Naive thymus-derived CD4-positive, alpha-beta T cell (primary cell): ENCODE measurements at regions of chr11 and their contacts with region 1.

Region 1: DNA sequence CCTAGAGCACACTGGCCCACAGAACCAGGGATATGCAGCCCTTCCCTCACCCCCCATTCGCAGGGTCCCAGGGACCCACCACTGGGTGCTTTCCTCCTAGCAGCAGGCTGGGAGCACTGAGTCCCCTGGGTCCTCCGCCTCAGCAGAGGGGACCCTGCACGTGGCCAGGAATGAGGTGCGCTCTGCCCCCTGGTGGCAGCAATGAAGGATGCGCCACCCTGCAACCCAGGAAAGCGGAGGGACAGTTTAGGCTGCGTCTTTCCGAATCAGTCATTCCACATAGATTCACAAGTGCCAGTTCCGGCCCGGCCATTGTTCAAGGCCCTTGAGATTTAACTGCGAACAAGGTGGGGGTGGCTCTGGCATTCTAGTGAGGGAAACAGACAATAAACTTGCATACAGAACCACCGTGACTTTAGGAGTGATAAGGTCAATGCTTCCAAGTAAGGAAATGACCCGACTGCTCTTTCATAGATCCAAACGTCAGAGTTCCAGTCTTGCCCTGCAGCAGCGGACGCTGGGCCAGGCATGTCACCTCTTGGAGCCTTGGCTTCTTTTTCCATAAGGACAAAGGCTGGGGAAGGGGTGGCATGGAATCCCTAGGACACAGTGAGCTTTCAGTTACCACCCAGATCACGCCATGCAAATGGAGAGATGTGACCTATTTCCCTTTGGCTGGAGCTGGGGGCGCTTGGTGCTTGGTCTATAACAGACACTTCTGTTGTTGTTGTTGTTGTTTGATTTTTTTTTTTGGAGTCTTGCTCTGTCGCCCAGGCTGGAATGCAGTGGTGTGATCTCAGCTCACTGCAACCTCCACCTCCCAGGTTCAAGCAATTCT is 7.7 kb downstream of the RIN1 start:
- DNase-seq: peak; percentile 72 to 88 (median 80)
- ATAC-seq: peak; percentile 89
- H3K4me3 ChIP-seq: peak overlapping the region; percentile 36
- H3K4me3 Mint-ChIP-seq: peak overlapping the region; percentile 18 to 81 (median 68)
- H3K27ac ChIP-seq: peak overlapping the region; percentile 82
- H3K27ac Mint-ChIP-seq: peak overlapping the region; percentile 65 to 97 (median 91)
- H3K4me1 ChIP-seq: peaks cover 26 to 40% of the 10 kb centered on the region in 2 donors
- H3K4me1 Mint-ChIP-seq: peaks cover 25 to 49% (median 46%) of the 10 kb centered on the region in 7 donors
- H3K27me3 ChIP-seq: no peaks in the 10 kb centered on the region
- H3K27me3 Mint-ChIP-seq: no peaks in the 10 kb centered on the region

Region 2: GRCh38 chr11:66222358-66223149 is 106.0 kb before region 1 on chr11:
- CTCF ChIA-PET with region 1: interaction called, 3 read pairs
- POLR2A ChIA-PET with region 1: no interaction called
- intact Hi-C with region 1: loop called in 1 of 2 experiments (anchors 1 kb)
- DNase-seq: peak; percentile 79 to 95 (median 92)
- ATAC-seq: peak; percentile 100
- H3K4me3 ChIP-seq: no peak overlapping the region
- H3K4me3 Mint-ChIP-seq: peak overlapping the region in 4 of 10 donors; percentile 26 to 35 (median 32)
- H3K27ac ChIP-seq: peak overlapping the region; percentile 89
- H3K27ac Mint-ChIP-seq: peak overlapping the region; percentile 78 to 98 (median 92)
- H3K4me1 ChIP-seq: peaks cover 4 to 7% of the 10 kb centered on the region in 2 donors
- H3K4me1 Mint-ChIP-seq: peaks cover 12 to 21% (median 18%) of the 10 kb centered on the region in 7 donors
- H3K27me3 ChIP-seq: no peaks in the 10 kb centered on the region
- H3K27me3 Mint-ChIP-seq: no peaks in the 10 kb centered on the region

Region 3: GRCh38 chr11:66282468-66283386 is 45.8 kb before region 1 on chr11:
- CTCF ChIA-PET with region 1: no interaction called
- POLR2A ChIA-PET with region 1: no interaction called
- intact Hi-C with region 1: loop called in 1 of 2 experiments (anchors 1 kb)
- DNase-seq: peak; percentile 96 to 100 (median 99)
- ATAC-seq: peak; percentile 94
- H3K4me3 ChIP-seq: no peak overlapping the region
- H3K4me3 Mint-ChIP-seq: peak overlapping the region in 9 of 10 donors; percentile 16 to 72 (median 59)
- H3K27ac ChIP-seq: peak overlapping the region; percentile 27
- H3K27ac Mint-ChIP-seq: peak overlapping the region; percentile 68 to 93 (median 85)
- H3K4me1 ChIP-seq: peaks cover 16 to 21% of the 10 kb centered on the region in 2 donors
- H3K4me1 Mint-ChIP-seq: peaks cover 18 to 52% (median 37%) of the 10 kb centered on the region in 7 donors
- H3K27me3 ChIP-seq: no peaks in the 10 kb centered on the region
- H3K27me3 Mint-ChIP-seq: peaks cover 0 to 14% (median 0%) of the 10 kb centered on the region in 5 donors

Region 4: GRCh38 chr11:66317723-66318599 is 10.6 kb before region 1 on chr11:
- CTCF ChIA-PET with region 1: interaction called, 52 read pairs
- POLR2A ChIA-PET with region 1: interaction called, 89 read pairs
- intact Hi-C with region 1: loop called in 1 of 2 experiments (anchors 1 kb)
- DNase-seq: peak in 7 of 9 donors; percentile 79 to 96 (median 86)
- ATAC-seq: peak; percentile 93
- H3K4me3 ChIP-seq: peak overlapping the region; percentile 54
- H3K4me3 Mint-ChIP-seq: peak overlapping the region; percentile 45 to 89 (median 83)
- H3K27ac ChIP-seq: peak overlapping the region; percentile 99
- H3K27ac Mint-ChIP-seq: peak overlapping the region; percentile 88 to 100 (median 99)
- H3K4me1 ChIP-seq: peaks cover 32 to 60% of the 10 kb centered on the region in 2 donors
- H3K4me1 Mint-ChIP-seq: peaks cover 39 to 78% (median 63%) of the 10 kb centered on the region in 7 donors
- H3K27me3 ChIP-seq: no peaks in the 10 kb centered on the region
- H3K27me3 Mint-ChIP-seq: peaks cover 0 to 9% (median 0%) of the 10 kb centered on the region in 5 donors

Region 5: GRCh38 chr11:66344550-66345315 is 16.2 kb after region 1 on chr11 and contains the start of gene BRMS1:
- CTCF ChIA-PET with region 1: interaction called, 5 read pairs
- POLR2A ChIA-PET with region 1: interaction called, 7 read pairs
- intact Hi-C with region 1: loop called in 1 of 2 experiments (anchors 1 kb)
- DNase-seq: peak; percentile 85 to 98 (median 93)
- ATAC-seq: peak; percentile 94
- H3K4me3 ChIP-seq: peak within 1 kb of the TSS; percentile 73
- H3K4me3 Mint-ChIP-seq: peak within 1 kb of the TSS; percentile 94 to 98 (median 96)
- H3K27ac ChIP-seq: peak within 1 kb of the TSS; percentile 92
- H3K27ac Mint-ChIP-seq: peak within 1 kb of the TSS; percentile 91 to 98 (median 96)
- H3K4me1 ChIP-seq: peaks cover 30 to 36% of the 10 kb centered on the region in 2 donors
- H3K4me1 Mint-ChIP-seq: peaks cover 25 to 62% (median 52%) of the 10 kb centered on the region in 7 donors
- H3K27me3 ChIP-seq: no peaks in the 10 kb centered on the region
- H3K27me3 Mint-ChIP-seq: peaks cover 0 to 4% (median 0%) of the 10 kb centered on the region in 5 donors
- total RNA-seq, gene BRMS1: 35.9 to 50.8 (median 48.4) TPM

Region 6: DNA sequence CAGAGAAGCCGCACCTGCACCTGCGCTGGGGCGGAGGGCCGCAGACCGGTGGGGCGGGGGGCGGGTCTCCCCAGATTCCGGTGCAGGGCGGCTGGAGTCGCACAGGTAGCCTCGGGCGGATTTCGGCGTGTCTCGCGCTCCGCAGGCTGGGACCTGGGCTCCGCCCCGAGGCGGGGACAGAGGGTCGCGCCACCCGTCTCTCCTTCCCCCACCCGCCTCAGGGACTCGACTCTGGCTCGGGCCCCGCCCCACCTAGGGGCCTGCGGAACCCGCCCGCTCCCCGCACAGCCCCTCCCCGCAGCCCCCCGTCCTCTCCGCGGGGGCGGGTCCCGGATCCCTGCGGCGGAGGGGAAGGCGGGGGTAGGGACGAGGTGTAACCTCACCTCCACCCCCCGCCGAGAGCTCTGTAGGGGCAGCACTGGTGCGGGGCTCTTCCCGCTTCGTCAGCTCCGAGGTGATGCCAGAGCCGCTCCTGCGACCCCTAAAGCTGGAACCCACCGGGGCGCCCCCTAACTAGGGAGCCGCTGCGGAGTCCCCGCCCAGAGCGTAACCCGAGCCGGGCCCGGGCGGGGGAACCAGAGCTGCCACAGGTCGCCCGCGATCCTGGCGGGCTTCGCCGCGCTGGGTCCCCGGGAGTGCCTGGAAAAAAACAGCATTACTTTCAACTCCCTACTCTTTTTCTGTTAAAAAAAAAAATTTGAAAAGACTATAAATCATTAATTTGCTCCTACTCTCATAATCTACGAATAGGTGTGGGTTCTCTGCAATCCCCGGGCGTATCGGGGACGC is 43.3 kb after region 1 on chr11 and contains the start of gene SLC29A2:
- CTCF ChIA-PET with region 1: no interaction called
- POLR2A ChIA-PET with region 1: no interaction called
- intact Hi-C with region 1: loop called in 1 of 2 experiments (anchors 5 kb)
- DNase-seq: peak; percentile 53 to 85 (median 80)
- ATAC-seq: peak; percentile 89
- H3K4me3 ChIP-seq: peak within 1 kb of the TSS; percentile 72
- H3K4me3 Mint-ChIP-seq: peak within 1 kb of the TSS; percentile 81 to 96 (median 88)
- H3K27ac ChIP-seq: peak within 1 kb of the TSS; percentile 83
- H3K27ac Mint-ChIP-seq: peak within 1 kb of the TSS; percentile 79 to 95 (median 90)
- H3K4me1 ChIP-seq: peaks cover 4 to 8% of the 10 kb centered on the region in 2 donors
- H3K4me1 Mint-ChIP-seq: peaks cover 0 to 24% (median 13%) of the 10 kb centered on the region in 7 donors
- H3K27me3 ChIP-seq: no peaks in the 10 kb centered on the region
- H3K27me3 Mint-ChIP-seq: peaks cover 0 to 3% (median 0%) of the 10 kb centered on the region in 5 donors
- total RNA-seq, gene SLC29A2: 6.0 to 18.9 (median 12.0) TPM

Region 7: DNA sequence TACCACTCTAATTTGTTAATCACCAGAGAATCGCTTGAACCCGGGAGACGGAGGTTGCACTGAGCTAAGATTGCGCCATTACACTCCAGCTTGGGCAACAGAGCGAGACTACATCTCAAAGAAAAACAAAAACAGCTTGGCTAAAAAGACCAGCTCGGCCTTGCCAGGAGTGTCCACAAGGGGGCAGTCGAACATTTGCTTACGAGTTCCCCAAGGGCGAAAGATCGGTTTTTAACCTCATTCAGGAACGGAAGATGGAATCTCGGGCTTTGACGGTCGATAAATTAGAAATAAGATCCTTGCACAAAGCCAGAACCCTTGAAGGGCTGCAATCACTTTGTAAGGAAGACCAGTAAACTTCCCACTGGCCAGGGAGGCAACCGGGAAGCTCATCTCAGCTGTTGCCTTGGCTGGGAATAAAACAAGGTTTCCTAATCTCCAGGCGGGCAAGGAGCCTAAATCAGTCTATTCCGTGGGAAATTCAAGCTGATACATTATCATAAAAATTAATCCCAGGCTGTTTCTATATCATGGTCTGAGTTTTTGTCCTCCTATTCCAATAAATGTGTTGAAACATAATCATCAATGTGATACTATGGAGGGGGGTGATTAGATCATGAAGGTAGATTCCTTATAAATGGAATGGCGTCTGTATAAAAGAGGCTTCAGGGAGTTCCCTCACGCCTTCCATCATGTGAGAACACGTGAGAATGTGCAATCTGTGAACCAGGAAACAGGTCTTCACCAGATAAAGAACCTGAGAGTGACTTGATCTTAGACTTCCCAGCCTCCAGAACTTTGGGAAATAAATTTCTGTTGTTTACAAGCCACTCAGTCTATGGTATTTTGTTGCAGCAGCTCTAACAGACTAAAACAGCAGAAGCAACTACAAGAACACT is 57.9 kb after region 1 on chr11:
- CTCF ChIA-PET with region 1: interaction called, 15 read pairs
- POLR2A ChIA-PET with region 1: no interaction called
- intact Hi-C with region 1: loop called (anchors 1 to 5 kb)
- DNase-seq: peak; percentile 59 to 83 (median 75)
- ATAC-seq: peak; percentile 83
- H3K4me3 ChIP-seq: no peak overlapping the region
- H3K4me3 Mint-ChIP-seq: peak overlapping the region; percentile 5 to 71 (median 40)
- H3K27ac ChIP-seq: no peak overlapping the region
- H3K27ac Mint-ChIP-seq: peak overlapping the region in 4 of 9 donors; percentile 0 to 20 (median 6)
- H3K4me1 ChIP-seq: peaks cover 4 to 8% of the 10 kb centered on the region in 2 donors
- H3K4me1 Mint-ChIP-seq: peaks cover 0 to 12% (median 7%) of the 10 kb centered on the region in 7 donors
- H3K27me3 ChIP-seq: no peaks in the 10 kb centered on the region
- H3K27me3 Mint-ChIP-seq: peaks cover 0 to 15% (median 0%) of the 10 kb centered on the region in 5 donors